SK-N-SH (cell line): ENCODE measurements at regions of chr14 and their contacts with region 1.

Region 1: GRCh38 chr14:30521899-30522736 is 36.8 kb upstream of the G2E3 start:
- DNase-seq: peak; percentile 8
- H3K4me3 ChIP-seq: no peak overlapping the region
- H3K27ac ChIP-seq: no peak overlapping the region
- H3K4me1 ChIP-seq: no peaks in the 10 kb centered on the region
- H3K27me3 ChIP-seq: no peaks in the 10 kb centered on the region
- CTCF ChIP-seq: peak; percentile 74
- EP300 ChIP-seq: no peak
- RAD21 ChIP-seq: peak; percentile 63

Region 2: GRCh38 chr14:30375296-30375892 is 146.7 kb before region 1 on chr14:
- CTCF ChIA-PET with region 1: interaction called, 30 read pairs
- POLR2A ChIA-PET with region 1: no interaction called
- DNase-seq: peak; percentile 47
- H3K4me3 ChIP-seq: peak overlapping the region in 1 of 2 experiments; percentile 43; a peak in 1 of 4 replicates
- H3K27ac ChIP-seq: no peak overlapping the region
- H3K4me1 ChIP-seq: no peaks in the 10 kb centered on the region
- H3K27me3 ChIP-seq: no peaks in the 10 kb centered on the region
- CTCF ChIP-seq: peak; percentile 77
- EP300 ChIP-seq: no peak
- RAD21 ChIP-seq: peak; percentile 60

Region 3: DNA sequence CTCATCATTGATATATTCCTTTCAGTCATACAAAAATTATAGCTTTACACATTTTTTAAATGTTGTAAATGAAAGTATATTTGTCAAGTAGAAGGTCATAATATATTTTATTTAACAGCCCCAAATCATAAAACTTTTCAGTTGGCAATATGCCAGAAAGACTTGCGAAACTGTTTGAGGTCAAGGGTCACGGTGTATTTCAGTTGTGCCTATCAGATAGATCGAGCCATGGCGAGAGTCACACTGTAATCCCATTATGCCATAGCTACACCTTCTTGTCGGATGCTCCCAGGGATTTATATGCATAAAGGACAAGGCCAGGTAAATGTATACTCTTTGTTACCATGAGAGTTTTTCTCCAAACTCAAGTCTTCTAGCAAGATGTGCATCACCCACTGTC is 10.1 kb after region 1 on chr14:
- CTCF ChIA-PET with region 1: interaction called, 21 read pairs
- POLR2A ChIA-PET with region 1: no interaction called
- DNase-seq: no peak
- H3K4me3 ChIP-seq: no peak overlapping the region
- H3K27ac ChIP-seq: no peak overlapping the region
- H3K4me1 ChIP-seq: no peaks in the 10 kb centered on the region
- H3K27me3 ChIP-seq: no peaks in the 10 kb centered on the region
- CTCF ChIP-seq: no peak
- EP300 ChIP-seq: no peak
- RAD21 ChIP-seq: no peak